A673 (cell line): ENCODE measurements at regions of chr14 and their contacts with region 1.

Region 1: DNA sequence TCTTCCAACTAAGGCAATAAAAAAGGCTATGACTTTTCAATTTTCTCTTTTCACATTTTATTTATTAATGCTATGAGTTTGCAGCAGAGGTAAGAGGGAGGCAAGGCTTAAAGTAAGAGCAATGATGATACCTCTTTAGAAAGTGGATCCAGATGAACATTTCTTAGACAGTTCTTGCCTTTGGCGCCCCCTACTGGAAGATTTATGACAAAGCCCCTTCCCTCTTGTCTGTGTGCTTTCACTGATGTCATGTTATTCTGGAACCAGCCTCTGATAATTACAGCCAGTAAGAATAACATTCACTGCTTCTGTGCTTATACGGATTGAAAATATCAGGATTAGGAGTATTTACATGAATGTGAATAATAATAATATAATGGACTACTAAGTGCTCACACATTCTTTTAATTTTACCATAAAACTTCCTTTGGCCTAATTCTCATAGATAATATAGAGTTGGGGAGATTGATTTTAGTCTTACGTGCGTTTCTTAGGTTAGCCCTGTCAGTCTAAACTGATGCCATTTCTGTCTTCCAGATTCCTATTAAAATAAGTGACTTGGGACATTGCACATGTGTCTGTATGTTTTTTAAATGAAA is 1929.9 kb upstream of the SEL1L start:
- DNase-seq: peak; percentile 87
- H3K4me3 ChIP-seq: no peak overlapping the region
- H3K27ac ChIP-seq: no peak overlapping the region
- H3K4me1 ChIP-seq: peaks cover 33% of the 10 kb centered on the region
- H3K27me3 ChIP-seq: no peaks in the 10 kb centered on the region
- CTCF ChIP-seq: peak; percentile 89

Region 2: GRCh38 chr14:82999802-83000201 is 463.8 kb before region 1 on chr14:
- CTCF ChIA-PET with region 1: no interaction called
- POLR2A ChIA-PET with region 1: no interaction called
- intact Hi-C with region 1: loop called (anchors 10 kb)
- DNase-seq: peak; percentile 55
- H3K4me3 ChIP-seq: no peak overlapping the region
- H3K27ac ChIP-seq: no peak overlapping the region
- H3K4me1 ChIP-seq: no peaks in the 10 kb centered on the region
- H3K27me3 ChIP-seq: no peaks in the 10 kb centered on the region
- CTCF ChIP-seq: peak; percentile 69

Region 3: GRCh38 chr14:83071888-83072501 is 391.6 kb before region 1 on chr14:
- CTCF ChIA-PET with region 1: no interaction called
- POLR2A ChIA-PET with region 1: no interaction called
- intact Hi-C with region 1: loop called (anchors 10 kb)
- DNase-seq: peak; percentile 79
- H3K4me3 ChIP-seq: no peak overlapping the region
- H3K27ac ChIP-seq: no peak overlapping the region
- H3K4me1 ChIP-seq: no peaks in the 10 kb centered on the region
- H3K27me3 ChIP-seq: no peaks in the 10 kb centered on the region
- CTCF ChIP-seq: peak; percentile 69

Region 4: DNA sequence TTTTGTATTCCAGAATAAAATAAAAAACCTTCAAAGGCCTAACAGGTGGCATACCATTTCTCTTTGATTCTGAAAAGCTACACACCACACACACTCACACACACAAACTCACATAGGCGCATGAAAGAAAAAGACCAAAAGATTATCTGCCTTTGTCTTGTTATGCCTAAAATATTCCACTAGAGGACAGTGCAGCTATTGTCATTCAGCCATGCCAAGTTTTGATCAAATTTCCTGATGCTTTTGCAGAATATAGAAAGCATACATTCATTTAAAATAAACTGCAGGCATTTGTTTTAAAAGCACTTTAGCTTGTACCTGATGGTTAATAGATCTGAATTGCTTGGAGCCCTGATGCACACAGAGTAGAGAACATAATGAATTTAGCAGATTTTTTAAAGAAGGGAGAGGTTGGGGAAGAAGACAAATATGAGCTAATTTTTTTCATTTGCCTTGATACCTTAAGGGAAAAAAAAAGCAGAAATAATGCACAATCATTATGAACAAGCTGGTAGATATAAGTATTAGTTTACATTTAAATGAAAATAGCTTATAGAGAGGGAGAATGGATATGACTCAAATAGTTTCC is 163.0 kb before region 1 on chr14:
- CTCF ChIA-PET with region 1: interaction called, 3 read pairs
- POLR2A ChIA-PET with region 1: no interaction called
- intact Hi-C with region 1: loop called (anchors 1 kb)
- DNase-seq: peak; percentile 80
- H3K4me3 ChIP-seq: no peak overlapping the region
- H3K27ac ChIP-seq: peak overlapping the region; percentile 50
- H3K4me1 ChIP-seq: peaks cover 42% of the 10 kb centered on the region
- H3K27me3 ChIP-seq: no peaks in the 10 kb centered on the region
- CTCF ChIP-seq: peak; percentile 88

Region 5: DNA sequence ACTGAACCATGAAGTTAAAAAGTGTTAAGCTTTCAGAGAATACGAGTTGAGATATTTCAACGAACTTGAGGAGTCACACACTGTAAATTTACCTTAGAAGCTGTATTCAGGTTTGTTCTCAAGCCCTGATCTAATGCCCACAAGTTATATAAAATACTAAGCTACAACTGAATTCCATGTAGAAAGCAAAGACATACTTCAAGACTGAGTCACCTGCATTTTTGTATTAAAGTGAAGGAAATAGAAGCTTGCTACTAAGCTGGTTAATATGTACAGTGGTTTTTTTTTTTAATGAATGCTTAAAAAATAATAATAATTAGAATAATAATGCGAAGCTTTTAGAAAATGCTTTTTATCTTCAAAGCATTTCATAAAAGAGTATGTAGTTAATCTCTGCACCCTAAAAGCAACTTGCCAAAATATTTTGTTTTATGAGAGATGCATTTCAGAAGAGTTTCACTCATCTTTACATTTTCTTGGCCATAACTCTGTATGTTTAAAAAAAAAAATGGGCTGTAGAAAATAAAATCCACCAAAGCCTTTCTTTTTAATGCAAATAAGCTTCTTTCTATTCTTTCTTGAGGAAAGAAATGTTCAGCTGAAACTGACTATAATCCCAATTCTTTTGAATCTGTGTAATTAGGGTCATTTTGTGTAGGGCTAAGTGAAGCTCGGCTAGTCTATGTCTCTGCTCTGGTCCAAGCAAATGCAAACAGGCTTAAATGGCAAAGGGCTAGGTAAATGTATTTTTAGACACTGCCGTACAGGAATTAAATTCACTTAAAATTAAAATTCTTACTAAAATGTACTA is 1018.9 kb after region 1 on chr14:
- CTCF ChIA-PET with region 1: no interaction called
- POLR2A ChIA-PET with region 1: no interaction called
- intact Hi-C with region 1: no loop called
- DNase-seq: peak; percentile 23
- H3K4me3 ChIP-seq: no peak overlapping the region
- H3K27ac ChIP-seq: no peak overlapping the region
- H3K4me1 ChIP-seq: peaks cover 8% of the 10 kb centered on the region
- H3K27me3 ChIP-seq: no peaks in the 10 kb centered on the region
- CTCF ChIP-seq: no peak